Mucosa of descending colon (tissue), 3 donors: ENCODE measurements at regions of chr4 and their contacts with region 1.

Region 1: GRCh38 chr4:52015366-52015765 is 4.8 kb downstream of the LRRC66 start:
- DNase-seq: no peak
- ATAC-seq: no peak
- H3K4me3 ChIP-seq: no peak overlapping the region
- H3K4me1 ChIP-seq: peaks cover 22% of the 10 kb centered on the region
- CTCF ChIP-seq: no peak

Region 2: DNA sequence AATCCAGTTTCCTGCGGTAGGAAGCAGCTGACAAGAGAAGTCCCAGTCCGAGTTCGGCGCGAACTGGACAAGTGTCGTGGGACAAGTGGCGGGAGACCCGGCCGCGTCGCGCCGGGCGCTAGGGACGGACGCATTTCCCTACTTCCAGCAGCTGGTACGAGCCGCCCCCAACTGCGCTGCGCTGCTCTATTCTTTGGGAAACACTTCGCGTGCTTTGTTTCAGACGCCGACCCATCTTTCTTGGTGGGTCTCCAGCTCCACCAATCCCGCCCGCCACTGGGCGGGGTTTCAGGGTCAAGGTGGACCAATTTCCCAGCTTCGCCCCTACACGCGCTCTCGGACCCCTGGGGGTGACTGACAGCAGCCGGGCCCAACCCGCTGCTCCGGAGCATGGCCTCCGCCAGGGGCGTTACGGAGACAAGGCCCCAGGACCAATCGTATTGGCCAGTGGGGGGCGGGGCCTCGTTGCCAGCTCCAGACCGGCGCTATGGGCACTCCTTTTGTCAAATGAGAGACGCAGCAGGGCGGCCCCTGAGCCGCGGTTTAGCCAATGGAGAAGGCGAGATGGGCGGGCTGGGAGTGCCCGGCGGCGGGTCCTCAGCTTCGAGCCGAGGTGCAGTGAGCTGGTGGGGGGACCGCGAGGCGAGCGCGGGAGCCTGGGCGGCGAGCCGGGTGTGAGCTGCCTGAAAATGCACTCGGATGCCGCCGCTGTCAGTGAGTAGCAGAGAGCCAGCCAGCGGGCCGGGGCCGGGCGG is 172.6 kb before region 1 on chr4 and contains the start of gene DCUN1D4:
- intact Hi-C with region 1: loop called in 1 of 2 experiments (anchors 5 kb)
- DNase-seq: peak; percentile 100
- ATAC-seq: peak; percentile 91
- H3K4me3 ChIP-seq: peak within 1 kb of the TSS; percentile 76
- H3K4me1 ChIP-seq: peaks cover 10% of the 10 kb centered on the region
- CTCF ChIP-seq: peak; percentile 62
- total RNA-seq, gene DCUN1D4: 31.1 to 72.4 (median 39.0) TPM

Region 3: GRCh38 chr4:51895813-51896408 is 119.5 kb before region 1 on chr4:
- intact Hi-C with region 1: no loop called
- DNase-seq: peak in 1 of 3 donors; percentile 83
- ATAC-seq: peak; percentile 94
- H3K4me3 ChIP-seq: no peak overlapping the region
- H3K4me1 ChIP-seq: no peaks in the 10 kb centered on the region
- CTCF ChIP-seq: peak; percentile 56

Region 4: DNA sequence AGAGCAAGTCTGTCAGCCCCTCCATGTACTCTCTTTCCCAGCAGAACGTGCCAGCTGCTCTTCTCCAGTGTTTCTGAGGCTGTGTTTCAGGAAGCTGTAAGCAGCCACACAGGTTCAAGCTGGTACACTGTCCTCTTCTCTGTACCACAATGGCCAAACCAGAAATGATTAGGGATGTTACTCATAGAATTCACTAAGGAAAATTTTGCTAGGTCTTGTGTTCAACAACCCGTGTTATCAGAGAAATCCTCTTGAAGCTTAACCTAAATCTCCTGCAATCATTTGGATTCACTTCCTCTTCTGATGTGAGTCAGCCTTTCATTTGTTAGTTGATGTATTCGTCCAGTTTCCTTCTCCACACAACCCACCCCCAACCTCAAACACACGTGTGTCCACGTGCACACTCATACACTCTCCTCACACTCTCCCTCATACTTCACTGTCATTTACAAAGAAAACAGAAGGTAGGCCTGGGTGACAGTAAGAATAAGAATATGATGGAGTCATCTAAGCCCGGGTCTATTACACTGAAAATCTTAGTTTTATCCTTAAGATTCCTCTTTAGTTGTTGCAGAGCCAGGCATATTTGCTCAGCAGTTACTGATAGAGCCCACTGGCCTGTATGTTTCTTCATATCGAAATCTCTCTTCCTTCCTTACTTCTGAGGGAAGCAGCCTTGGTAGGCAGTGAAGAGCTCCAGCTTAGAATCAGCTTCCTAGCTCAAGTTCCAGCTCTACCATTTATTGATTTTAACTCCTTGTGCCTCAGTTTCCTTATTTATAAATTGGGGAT is 109.0 kb before region 1 on chr4:
- intact Hi-C with region 1: loop called in 1 of 2 experiments (anchors 5 kb)
- DNase-seq: peak in 1 of 3 donors; percentile 34
- ATAC-seq: peak; percentile 70
- H3K4me3 ChIP-seq: no peak overlapping the region
- H3K4me1 ChIP-seq: peaks cover 29% of the 10 kb centered on the region
- CTCF ChIP-seq: no peak